ENCODE measurements at regions of chr2 and their contacts with region 1.

Region 1: GRCh38 chr2:195656859-195657633 is at the start of gene SLC39A10:
- DNase-seq: peak; percentile 95 to 100 (median 98)
- ATAC-seq: peak; percentile 86
- H3K4me3 ChIP-seq: peak within 1 kb of the TSS; percentile 81
- H3K4me3 Mint-ChIP-seq: peak within 1 kb of the TSS; percentile 95 to 100 (median 99)
- H3K27ac ChIP-seq: peak within 1 kb of the TSS; percentile 99
- H3K27ac Mint-ChIP-seq: peak within 1 kb of the TSS; percentile 100
- H3K4me1 ChIP-seq: peaks cover 3 to 24% of the 10 kb centered on the region in 2 donors
- H3K4me1 Mint-ChIP-seq: peaks cover 7 to 36% (median 30%) of the 10 kb centered on the region in 7 donors
- H3K27me3 ChIP-seq: no peaks in the 10 kb centered on the region
- H3K27me3 Mint-ChIP-seq: peaks cover 0 to 9% (median 0%) of the 10 kb centered on the region in 5 donors
- total RNA-seq, gene SLC39A10: 48.3 to 92.9 (median 60.7) TPM

Region 2: GRCh38 chr2:194104687-194105086 is 1552.4 kb before region 1 on chr2:
- CTCF ChIA-PET with region 1: no interaction called
- POLR2A ChIA-PET with region 1: no interaction called
- intact Hi-C with region 1: no loop called
- DNase-seq: no peak
- ATAC-seq: peak; percentile 82
- H3K4me3 ChIP-seq: no peak overlapping the region
- H3K4me3 Mint-ChIP-seq: no peak overlapping the region
- H3K27ac ChIP-seq: no peak overlapping the region
- H3K27ac Mint-ChIP-seq: no peak overlapping the region
- H3K4me1 ChIP-seq: no peaks in the 10 kb centered on the region
- H3K4me1 Mint-ChIP-seq: no peaks in the 10 kb centered on the region
- H3K27me3 ChIP-seq: no peaks in the 10 kb centered on the region
- H3K27me3 Mint-ChIP-seq: peaks cover 0 to 4% (median 0%) of the 10 kb centered on the region in 5 donors

Region 3: GRCh38 chr2:195057001-195057400 is 600.0 kb before region 1 on chr2:
- CTCF ChIA-PET with region 1: no interaction called
- POLR2A ChIA-PET with region 1: no interaction called
- intact Hi-C with region 1: no loop called
- DNase-seq: no peak
- ATAC-seq: no peak
- H3K4me3 ChIP-seq: no peak overlapping the region
- H3K4me3 Mint-ChIP-seq: no peak overlapping the region
- H3K27ac ChIP-seq: no peak overlapping the region
- H3K27ac Mint-ChIP-seq: no peak overlapping the region
- H3K4me1 ChIP-seq: no peaks in the 10 kb centered on the region
- H3K4me1 Mint-ChIP-seq: no peaks in the 10 kb centered on the region
- H3K27me3 ChIP-seq: no peaks in the 10 kb centered on the region
- H3K27me3 Mint-ChIP-seq: no peaks in the 10 kb centered on the region

Region 4: DNA sequence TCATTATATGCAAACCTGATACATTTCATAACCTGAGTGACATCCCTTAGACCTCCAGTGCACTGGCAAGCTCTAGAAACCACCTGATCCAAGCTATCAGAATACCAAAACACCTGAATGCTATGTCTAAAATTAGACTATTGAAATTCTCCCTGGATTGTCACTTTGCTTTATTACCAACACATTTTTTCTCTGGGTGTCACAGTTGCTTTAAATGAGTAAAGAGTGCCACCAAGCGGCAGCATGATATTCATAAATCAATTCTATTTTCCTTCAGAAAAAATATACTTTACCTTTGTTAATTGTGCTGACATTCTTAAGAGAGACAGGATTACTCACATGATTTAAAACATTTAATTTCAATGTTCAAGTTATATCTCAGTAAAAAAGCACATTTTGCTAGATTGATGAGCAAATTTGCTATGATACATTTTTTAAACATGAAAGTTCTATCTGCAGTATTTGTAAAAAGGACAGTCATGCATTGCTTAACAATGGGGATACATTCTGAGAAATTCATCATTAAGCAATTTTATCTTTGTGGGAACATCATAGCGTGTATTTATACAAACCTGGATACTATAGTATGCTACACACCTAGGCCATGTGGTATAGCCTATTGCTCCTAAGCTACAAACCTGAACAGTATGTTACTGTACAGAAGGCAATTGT is 338.5 kb before region 1 on chr2:
- CTCF ChIA-PET with region 1: interaction called, 10 read pairs
- POLR2A ChIA-PET with region 1: interaction called, 3 read pairs
- intact Hi-C with region 1: loop called (anchors 1 kb)
- DNase-seq: peak in 7 of 9 donors; percentile 11 to 57 (median 53)
- ATAC-seq: peak; percentile 57
- H3K4me3 ChIP-seq: no peak overlapping the region
- H3K4me3 Mint-ChIP-seq: no peak overlapping the region
- H3K27ac ChIP-seq: no peak overlapping the region
- H3K27ac Mint-ChIP-seq: no peak overlapping the region
- H3K4me1 ChIP-seq: no peaks in the 10 kb centered on the region
- H3K4me1 Mint-ChIP-seq: peaks cover 0 to 35% (median 18%) of the 10 kb centered on the region in 7 donors
- H3K27me3 ChIP-seq: no peaks in the 10 kb centered on the region
- H3K27me3 Mint-ChIP-seq: no peaks in the 10 kb centered on the region

Region 5: GRCh38 chr2:195498176-195498575 is 158.9 kb before region 1 on chr2:
- CTCF ChIA-PET with region 1: interaction called, 66 read pairs
- POLR2A ChIA-PET with region 1: interaction called, 85 read pairs
- intact Hi-C with region 1: loop called (anchors 1 kb)
- DNase-seq: peak in 7 of 9 donors; percentile 25 to 60 (median 47)
- ATAC-seq: peak; percentile 68
- H3K4me3 ChIP-seq: no peak overlapping the region
- H3K4me3 Mint-ChIP-seq: peak overlapping the region in 4 of 10 donors; percentile 20 to 60 (median 32)
- H3K27ac ChIP-seq: no peak overlapping the region
- H3K27ac Mint-ChIP-seq: peak overlapping the region in 7 of 9 donors; percentile 14 to 88 (median 63)
- H3K4me1 ChIP-seq: peaks cover 0 to 19% of the 10 kb centered on the region in 2 donors
- H3K4me1 Mint-ChIP-seq: peaks cover 12 to 81% (median 54%) of the 10 kb centered on the region in 7 donors
- H3K27me3 ChIP-seq: no peaks in the 10 kb centered on the region
- H3K27me3 Mint-ChIP-seq: no peaks in the 10 kb centered on the region

Region 6: DNA sequence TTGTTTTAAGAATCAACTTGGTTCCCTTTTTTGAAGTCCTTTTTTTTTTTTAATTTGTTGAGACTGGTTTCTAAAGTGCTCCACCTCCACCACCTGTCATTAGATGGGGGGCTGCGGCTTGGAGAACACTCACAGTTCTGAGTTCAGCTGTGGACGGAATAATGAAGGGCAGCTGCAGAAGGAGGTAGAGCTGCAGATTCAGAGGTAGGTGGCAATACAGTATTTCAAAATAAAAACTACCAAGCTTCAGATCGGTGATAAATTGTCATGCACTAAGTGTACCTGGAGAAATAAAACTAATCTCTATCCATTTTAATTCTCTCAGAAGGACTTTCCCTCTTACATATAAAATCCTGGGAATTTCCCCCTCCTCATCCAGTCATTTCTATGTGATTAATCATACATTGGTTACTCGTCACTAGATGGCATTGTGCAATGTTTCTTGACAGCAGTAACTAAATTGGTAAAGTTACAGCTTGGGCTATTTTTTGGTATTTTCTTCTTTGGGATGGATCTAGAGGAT is 81.1 kb before region 1 on chr2:
- CTCF ChIA-PET with region 1: interaction called, 60 read pairs
- POLR2A ChIA-PET with region 1: interaction called, 136 read pairs
- intact Hi-C with region 1: loop called (anchors 1 kb)
- DNase-seq: peak in 1 of 9 donors; percentile 20
- ATAC-seq: peak; percentile 49
- H3K4me3 ChIP-seq: no peak overlapping the region
- H3K4me3 Mint-ChIP-seq: peak overlapping the region; percentile 14 to 79 (median 63)
- H3K27ac ChIP-seq: peak overlapping the region; percentile 21
- H3K27ac Mint-ChIP-seq: peak overlapping the region; percentile 27 to 94 (median 85)
- H3K4me1 ChIP-seq: peaks cover 15 to 51% of the 10 kb centered on the region in 2 donors
- H3K4me1 Mint-ChIP-seq: peaks cover 38 to 91% (median 82%) of the 10 kb centered on the region in 7 donors
- H3K27me3 ChIP-seq: no peaks in the 10 kb centered on the region
- H3K27me3 Mint-ChIP-seq: no peaks in the 10 kb centered on the region

Region 7: DNA sequence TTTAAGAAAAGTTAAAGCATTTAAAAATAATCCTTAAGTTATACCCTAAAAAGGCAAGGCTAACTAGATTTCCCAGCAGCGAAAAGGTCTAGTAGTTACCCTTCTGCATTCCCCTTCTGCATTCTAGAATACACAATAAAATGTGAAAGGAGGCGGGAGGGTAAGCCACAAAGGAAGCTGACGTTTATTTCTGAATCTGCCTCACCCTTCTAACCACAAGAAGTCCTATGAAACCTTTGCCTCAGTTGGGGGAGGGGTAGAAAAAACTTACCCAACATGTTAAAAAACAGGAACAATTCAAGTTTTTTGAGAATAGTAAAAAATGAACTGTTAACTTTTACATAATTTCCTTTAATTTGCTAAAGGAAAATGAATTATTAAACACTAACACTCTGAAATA is 503.1 kb after region 1 on chr2:
- CTCF ChIA-PET with region 1: no interaction called
- POLR2A ChIA-PET with region 1: no interaction called
- intact Hi-C with region 1: loop called in 1 of 2 experiments (anchors 2 kb)
- DNase-seq: peak in 8 of 9 donors; percentile 61 to 92 (median 88)
- ATAC-seq: peak; percentile 84
- H3K4me3 ChIP-seq: peak overlapping the region; percentile 33
- H3K4me3 Mint-ChIP-seq: peak overlapping the region; percentile 61 to 98 (median 87)
- H3K27ac ChIP-seq: peak overlapping the region; percentile 94
- H3K27ac Mint-ChIP-seq: peak overlapping the region; percentile 84 to 98 (median 94)
- H3K4me1 ChIP-seq: peaks cover 53 to 65% of the 10 kb centered on the region in 2 donors
- H3K4me1 Mint-ChIP-seq: peaks cover 45 to 85% (median 69%) of the 10 kb centered on the region in 7 donors
- H3K27me3 ChIP-seq: no peaks in the 10 kb centered on the region
- H3K27me3 Mint-ChIP-seq: no peaks in the 10 kb centered on the region

Region 8: DNA sequence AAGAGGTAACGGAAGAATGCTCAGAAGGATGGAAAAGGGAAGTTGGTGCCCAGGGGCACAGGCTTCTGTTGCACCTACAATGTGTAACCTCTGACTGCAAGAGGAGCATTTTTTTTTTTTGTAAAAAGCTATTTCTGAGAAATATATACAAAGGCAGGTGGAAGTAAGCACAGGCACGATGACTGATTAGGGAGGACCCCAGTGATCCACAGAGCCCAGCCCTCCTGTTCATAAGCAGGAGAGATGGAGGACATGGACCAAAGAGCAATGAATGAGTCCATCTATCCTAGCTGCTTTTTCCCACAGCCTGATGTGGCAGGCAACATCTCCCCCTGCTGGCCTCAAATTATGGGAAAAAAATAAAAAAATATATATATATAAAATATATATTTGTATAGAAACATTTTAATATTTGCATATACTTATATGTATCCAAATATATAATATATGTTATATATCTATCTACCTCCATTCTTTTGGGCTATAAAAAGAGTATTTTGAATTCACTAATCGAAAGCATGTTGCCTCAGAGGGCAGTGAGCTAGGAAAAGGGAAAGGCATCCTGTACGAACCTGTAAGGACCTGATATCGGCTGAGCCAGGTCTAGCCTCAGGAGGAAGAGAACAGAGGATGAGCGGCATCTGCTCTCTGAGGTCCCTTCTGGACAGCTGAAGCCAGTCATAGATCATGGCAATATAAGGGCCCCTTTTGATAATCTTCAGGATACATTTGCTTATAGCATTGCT is 680.3 kb after region 1 on chr2:
- CTCF ChIA-PET with region 1: no interaction called
- POLR2A ChIA-PET with region 1: no interaction called
- intact Hi-C with region 1: loop called (anchors 2 to 10 kb)
- DNase-seq: peak in 5 of 9 donors; percentile 10 to 39 (median 19)
- ATAC-seq: peak; percentile 52
- H3K4me3 ChIP-seq: no peak overlapping the region
- H3K4me3 Mint-ChIP-seq: no peak overlapping the region
- H3K27ac ChIP-seq: no peak overlapping the region
- H3K27ac Mint-ChIP-seq: no peak overlapping the region
- H3K4me1 ChIP-seq: no peaks in the 10 kb centered on the region
- H3K4me1 Mint-ChIP-seq: peaks cover 0 to 6% (median 1%) of the 10 kb centered on the region in 7 donors
- H3K27me3 ChIP-seq: no peaks in the 10 kb centered on the region
- H3K27me3 Mint-ChIP-seq: peaks cover 0 to 18% (median 3%) of the 10 kb centered on the region in 5 donors

Region 9: DNA sequence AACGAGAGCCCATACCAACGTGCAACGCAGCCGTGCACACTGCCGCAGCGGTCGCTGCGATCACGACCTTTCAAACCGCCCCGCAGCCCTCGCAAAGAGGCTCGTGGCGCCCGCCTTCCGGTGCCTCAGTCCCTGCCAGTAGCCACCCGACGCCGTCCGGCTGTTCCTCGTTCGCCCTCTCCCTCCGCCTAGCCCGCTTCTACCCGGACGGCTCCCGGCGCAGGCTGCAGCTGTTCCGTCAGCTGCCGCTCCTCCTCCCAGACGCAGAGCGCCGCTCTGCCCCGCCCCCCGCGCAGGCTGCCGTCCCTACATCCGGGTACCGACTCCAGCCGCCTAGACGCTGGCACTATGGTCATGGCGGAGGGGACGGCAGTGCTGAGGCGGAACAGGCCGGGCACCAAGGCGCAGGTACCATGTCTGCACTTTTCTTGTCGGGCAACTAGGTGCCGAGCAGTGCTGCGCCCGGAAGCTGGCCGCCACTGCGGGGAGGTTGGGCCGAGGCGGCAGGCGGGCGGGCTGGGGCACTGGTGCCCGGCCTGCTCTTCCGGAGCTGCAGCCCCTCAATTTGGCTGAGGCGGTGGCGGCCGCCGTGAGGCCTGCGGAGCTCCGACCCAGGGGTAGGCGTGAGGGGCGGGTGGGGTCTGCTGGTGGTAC is 1858.8 kb after region 1 on chr2 and contains the start of gene MOB4:
- CTCF ChIA-PET with region 1: no interaction called
- POLR2A ChIA-PET with region 1: no interaction called
- intact Hi-C with region 1: loop called in 1 of 2 experiments (anchors 5 kb)
- DNase-seq: peak; percentile 87 to 98 (median 92)
- ATAC-seq: peak; percentile 97
- H3K4me3 ChIP-seq: peak within 1 kb of the TSS; percentile 75
- H3K4me3 Mint-ChIP-seq: peak within 1 kb of the TSS; percentile 85 to 99 (median 98)
- H3K27ac ChIP-seq: peak within 1 kb of the TSS; percentile 86
- H3K27ac Mint-ChIP-seq: peak within 1 kb of the TSS; percentile 88 to 99 (median 95)
- H3K4me1 ChIP-seq: peaks cover 10 to 12% of the 10 kb centered on the region in 2 donors
- H3K4me1 Mint-ChIP-seq: peaks cover 28 to 49% (median 40%) of the 10 kb centered on the region in 7 donors
- H3K27me3 ChIP-seq: no peaks in the 10 kb centered on the region
- H3K27me3 Mint-ChIP-seq: no peaks in the 10 kb centered on the region
- total RNA-seq, gene MOB4: 16.1 to 22.5 (median 17.9) TPM